ENCODE measurements at regions of chr1 and their contacts with region 1.

Region 1: GRCh38 chr1:206878456-206878855 is 13.0 kb downstream of the IL20 start:
- DNase-seq: no peak
- H3K4me3 Mint-ChIP-seq: no peak overlapping the region
- H3K27ac Mint-ChIP-seq: no peak overlapping the region
- H3K4me1 Mint-ChIP-seq: no peaks in the 10 kb centered on the region
- H3K27me3 Mint-ChIP-seq: no peaks in the 10 kb centered on the region

Region 2: GRCh38 chr1:206856674-206857464 is 21.6 kb before region 1 on chr1:
- CTCF ChIA-PET with region 1: interaction called, 6 read pairs
- intact Hi-C with region 1: loop called (anchors 2 kb)
- DNase-seq: no peak
- H3K4me3 Mint-ChIP-seq: no peak overlapping the region
- H3K27ac Mint-ChIP-seq: no peak overlapping the region
- H3K4me1 Mint-ChIP-seq: peaks cover 19% of the 10 kb centered on the region
- H3K27me3 Mint-ChIP-seq: no peaks in the 10 kb centered on the region

Measured in activated naive CD4-positive, alpha-beta T cell treated with anti-CD3 and anti-CD28 coated beads for 36 hours (primary cell).